Ovary (tissue), 10 donors: ENCODE measurements at regions of chr1 and their contacts with region 1.

Region 1: DNA sequence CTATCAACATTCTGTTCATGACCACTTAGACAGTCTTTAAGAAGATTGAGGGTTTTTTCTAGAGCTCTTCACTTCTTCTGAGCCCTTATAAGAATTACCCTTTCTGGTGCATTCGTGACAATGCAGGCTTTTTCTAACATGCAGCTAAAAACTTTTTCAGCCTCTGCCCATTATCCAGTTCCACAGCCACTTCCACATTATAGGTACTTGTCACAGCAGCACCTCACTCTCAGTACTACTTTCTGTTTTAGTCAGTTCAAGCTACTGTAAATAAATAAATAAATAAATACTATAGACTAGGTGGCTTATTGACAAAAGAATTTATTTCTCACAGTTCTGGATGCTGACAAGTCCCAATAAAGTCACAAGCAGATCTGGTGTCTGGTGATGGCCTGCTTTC is 284.4 kb upstream of the PKN2 start:
- DNase-seq: no peak
- H3K4me3 ChIP-seq: no peak overlapping the region
- H3K27ac ChIP-seq: no peak overlapping the region
- H3K4me1 ChIP-seq: no peaks in the 10 kb centered on the region
- H3K27me3 ChIP-seq: no peaks in the 10 kb centered on the region
- CTCF ChIP-seq: no peak
- EP300 ChIP-seq: no peak
- POLR2A ChIP-seq: no peak

Region 2: DNA sequence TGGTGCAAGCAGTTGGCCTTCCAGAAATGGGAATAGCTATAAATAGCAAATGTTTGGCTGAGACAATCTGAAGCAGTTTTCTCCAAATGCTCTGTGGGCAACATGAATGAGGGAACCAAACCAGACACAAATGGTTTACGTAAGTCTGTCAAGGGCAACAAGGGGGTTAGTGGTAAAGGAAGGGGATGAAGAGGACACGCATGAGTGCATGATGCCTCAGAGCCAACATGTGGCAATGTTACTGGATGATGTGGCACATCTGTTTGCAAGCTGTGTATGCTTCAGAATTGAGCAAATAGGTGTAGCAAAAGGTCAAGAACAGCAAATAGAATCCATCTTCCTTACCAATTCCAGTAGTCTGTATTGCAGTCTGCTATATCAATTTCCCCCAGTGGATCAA is 1147.3 kb before region 1 on chr1:
- intact Hi-C with region 1: no loop called
- DNase-seq: no peak
- H3K4me3 ChIP-seq: no peak overlapping the region
- H3K27ac ChIP-seq: no peak overlapping the region
- H3K4me1 ChIP-seq: no peaks in the 10 kb centered on the region
- H3K27me3 ChIP-seq: no peaks in the 10 kb centered on the region
- CTCF ChIP-seq: no peak
- EP300 ChIP-seq: no peak
- POLR2A ChIP-seq: no peak

Region 3: GRCh38 chr1:88284066-88284465 is 115.6 kb before region 1 on chr1:
- intact Hi-C with region 1: no loop called
- DNase-seq: no peak
- H3K4me3 ChIP-seq: no peak overlapping the region
- H3K27ac ChIP-seq: no peak overlapping the region
- H3K4me1 ChIP-seq: no peaks in the 10 kb centered on the region
- H3K27me3 ChIP-seq: no peaks in the 10 kb centered on the region
- CTCF ChIP-seq: no peak
- EP300 ChIP-seq: no peak
- POLR2A ChIP-seq: no peak

Region 4: DNA sequence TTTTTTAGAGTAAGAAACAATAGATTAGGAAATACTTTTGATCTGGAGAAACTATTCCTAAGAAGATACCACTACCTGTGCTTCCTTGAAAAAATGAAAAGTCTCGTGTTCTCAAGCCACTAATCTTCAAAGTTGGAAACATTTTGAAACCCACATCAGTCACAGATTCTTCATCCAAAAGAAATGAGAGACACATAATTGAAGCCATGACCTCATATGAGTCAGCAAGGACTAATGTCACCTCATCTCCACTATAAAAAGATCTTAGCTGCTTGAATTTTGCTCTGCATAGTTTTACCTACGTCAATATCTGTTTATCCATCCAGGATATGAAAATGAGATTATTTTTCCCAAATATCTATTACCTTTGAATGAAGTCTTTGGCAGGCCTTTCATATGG is 28.3 kb before region 1 on chr1:
- intact Hi-C with region 1: loop called in 1 of 4 experiments (anchors 2 kb)
- DNase-seq: no peak
- H3K4me3 ChIP-seq: no peak overlapping the region
- H3K27ac ChIP-seq: no peak overlapping the region
- H3K4me1 ChIP-seq: peaks cover 2% of the 10 kb centered on the region
- H3K27me3 ChIP-seq: no peaks in the 10 kb centered on the region
- CTCF ChIP-seq: no peak
- EP300 ChIP-seq: no peak
- POLR2A ChIP-seq: no peak